ENCODE measurements at regions of chr2 and their contacts with region 1.

Region 1: GRCh38 chr2:220880623-220881596 is 691.2 kb downstream of the EPHA4 start:
- DNase-seq: no peak
- H3K4me3 ChIP-seq: no peak overlapping the region
- H3K27ac ChIP-seq: no peak overlapping the region
- H3K27me3 ChIP-seq: no peaks in the 10 kb centered on the region
- CTCF ChIP-seq: no peak

Region 2: GRCh38 chr2:220704810-220705209 is 176.1 kb before region 1 on chr2:
- CTCF ChIA-PET with region 1: interaction called, 10 read pairs
- POLR2A ChIA-PET with region 1: no interaction called
- DNase-seq: no peak
- H3K4me3 ChIP-seq: no peak overlapping the region
- H3K27ac ChIP-seq: no peak overlapping the region
- H3K27me3 ChIP-seq: no peaks in the 10 kb centered on the region
- CTCF ChIP-seq: no peak